Panc1 (cell line): ENCODE measurements at regions of chr1 and their contacts with region 1.

Region 1: GRCh38 chr1:187891993-187892682 is 1063.4 kb downstream of the PLA2G4A start:
- DNase-seq: no peak
- ATAC-seq: no peak
- H3K4me3 ChIP-seq: no peak overlapping the region
- H3K27ac ChIP-seq: no peak overlapping the region
- H3K4me1 ChIP-seq: no peaks in the 10 kb centered on the region
- H3K27me3 ChIP-seq: no peaks in the 10 kb centered on the region
- CTCF ChIP-seq: no peak

Region 2: DNA sequence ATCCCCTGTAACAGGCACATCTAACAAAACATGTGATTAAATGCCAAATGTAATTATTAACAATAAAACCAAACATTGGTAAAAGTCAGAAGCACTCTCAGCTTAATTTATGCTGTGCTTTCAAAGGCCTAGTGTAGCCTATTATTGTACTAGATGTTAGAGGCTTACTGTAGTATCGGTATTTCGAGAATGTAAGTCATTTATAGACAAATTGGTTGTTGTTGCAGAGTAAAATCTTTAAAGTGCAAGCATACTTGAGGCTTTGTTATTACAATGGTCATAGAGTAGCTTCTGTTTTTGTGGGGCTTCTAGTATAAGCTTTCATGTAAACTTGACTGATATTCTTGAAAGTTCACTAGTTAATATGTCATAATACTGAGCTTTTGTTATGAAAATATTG is 97.6 kb before region 1 on chr1:
- CTCF ChIA-PET with region 1: no interaction called
- POLR2A ChIA-PET with region 1: interaction called, 12 read pairs
- in situ Hi-C with region 1: no loop called
- intact Hi-C with region 1: no loop called
- DNase-seq: no peak
- ATAC-seq: no peak
- H3K4me3 ChIP-seq: no peak overlapping the region
- H3K27ac ChIP-seq: no peak overlapping the region
- H3K4me1 ChIP-seq: no peaks in the 10 kb centered on the region
- H3K27me3 ChIP-seq: no peaks in the 10 kb centered on the region
- CTCF ChIP-seq: no peak

Region 3: GRCh38 chr1:188023206-188023605 is 131.1 kb after region 1 on chr1:
- CTCF ChIA-PET with region 1: no interaction called
- POLR2A ChIA-PET with region 1: no interaction called
- in situ Hi-C with region 1: no loop called
- intact Hi-C with region 1: no loop called
- DNase-seq: no peak
- ATAC-seq: no peak
- H3K4me3 ChIP-seq: no peak overlapping the region
- H3K27ac ChIP-seq: no peak overlapping the region
- H3K4me1 ChIP-seq: no peaks in the 10 kb centered on the region
- H3K27me3 ChIP-seq: no peaks in the 10 kb centered on the region
- CTCF ChIP-seq: no peak